MCF 10A (cell line): ENCODE measurements at regions of chr1 and their contacts with region 1.

Region 1: DNA sequence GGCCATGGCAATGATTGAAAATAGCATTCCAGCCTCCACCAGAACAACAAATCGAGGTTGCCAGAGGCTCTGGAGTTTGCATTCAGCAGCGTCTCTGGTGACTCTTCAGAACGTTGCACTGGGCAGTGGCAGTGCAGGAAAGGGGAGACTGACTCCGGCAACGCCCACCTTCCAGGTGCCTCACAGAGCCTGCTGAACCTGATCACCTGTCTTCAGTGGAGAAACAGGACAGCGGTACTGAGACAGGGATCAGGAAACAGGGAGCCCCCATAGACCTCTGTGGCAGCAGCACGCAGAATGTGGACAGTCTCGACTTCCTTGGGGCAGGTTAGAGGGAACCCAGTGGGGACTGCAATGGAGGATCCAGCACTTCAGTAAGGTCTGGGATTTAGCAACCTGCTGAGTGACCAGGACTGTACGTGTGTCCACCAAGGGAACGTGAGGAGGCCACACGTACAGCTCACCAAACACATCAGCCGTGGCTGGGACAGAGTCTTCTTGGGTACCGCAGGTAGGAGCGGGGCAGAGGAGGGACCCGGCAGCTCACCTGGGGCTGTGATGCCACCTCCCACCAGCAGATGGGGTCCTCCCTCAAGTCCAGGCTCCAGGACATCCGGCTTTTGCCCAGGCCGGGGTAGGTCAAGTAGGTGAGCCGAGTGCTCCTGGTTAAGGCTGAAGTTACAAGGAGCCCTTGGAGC is 128.6 kb downstream of the PRDM2 start:
- DNase-seq: peak; percentile 51
- H3K4me3 Mint-ChIP-seq: no peak overlapping the region
- H3K27ac Mint-ChIP-seq: peak overlapping the region; percentile 31
- H3K4me1 Mint-ChIP-seq: peaks cover 11% of the 10 kb centered on the region
- H3K27me3 Mint-ChIP-seq: no peaks in the 10 kb centered on the region
- CTCF ChIP-seq: peak; percentile 66

Region 2: GRCh38 chr1:13469343-13469742 is 359.3 kb before region 1 on chr1:
- CTCF ChIA-PET with region 1: no interaction called
- POLR2A ChIA-PET with region 1: no interaction called
- intact Hi-C with region 1: loop called (anchors 10 kb)
- DNase-seq: peak; percentile 55
- H3K4me3 Mint-ChIP-seq: no peak overlapping the region
- H3K27ac Mint-ChIP-seq: no peak overlapping the region
- H3K4me1 Mint-ChIP-seq: no peaks in the 10 kb centered on the region
- H3K27me3 Mint-ChIP-seq: no peaks in the 10 kb centered on the region
- CTCF ChIP-seq: peak; percentile 46

Region 3: DNA sequence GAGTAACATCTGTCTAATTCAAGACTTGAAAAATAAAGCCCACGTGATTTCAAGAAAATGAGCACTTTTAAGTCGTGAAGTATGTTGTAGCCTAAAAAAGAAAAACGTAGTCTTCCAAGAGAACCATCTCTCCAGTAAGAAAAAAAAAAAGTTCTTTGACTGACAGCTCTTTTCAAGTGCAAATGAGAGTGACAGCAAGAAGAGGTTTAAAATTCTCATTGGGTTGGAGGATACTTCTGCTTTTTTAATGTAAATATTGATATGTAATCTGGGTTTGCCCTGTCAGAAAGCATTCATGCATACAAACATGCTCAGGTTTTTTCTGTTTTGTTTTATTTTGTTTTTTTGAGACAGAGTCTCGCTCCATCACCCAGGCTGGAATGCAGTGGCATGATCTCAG is 160.9 kb before region 1 on chr1:
- CTCF ChIA-PET with region 1: interaction called, 6 read pairs
- POLR2A ChIA-PET with region 1: no interaction called
- intact Hi-C with region 1: loop called (anchors 5 kb)
- DNase-seq: no peak
- H3K4me3 Mint-ChIP-seq: no peak overlapping the region
- H3K27ac Mint-ChIP-seq: no peak overlapping the region
- H3K4me1 Mint-ChIP-seq: peaks cover 20% of the 10 kb centered on the region
- H3K27me3 Mint-ChIP-seq: no peaks in the 10 kb centered on the region
- CTCF ChIP-seq: no peak